ENCODE measurements at regions of chr21 and their contacts with region 1.

Region 1: DNA sequence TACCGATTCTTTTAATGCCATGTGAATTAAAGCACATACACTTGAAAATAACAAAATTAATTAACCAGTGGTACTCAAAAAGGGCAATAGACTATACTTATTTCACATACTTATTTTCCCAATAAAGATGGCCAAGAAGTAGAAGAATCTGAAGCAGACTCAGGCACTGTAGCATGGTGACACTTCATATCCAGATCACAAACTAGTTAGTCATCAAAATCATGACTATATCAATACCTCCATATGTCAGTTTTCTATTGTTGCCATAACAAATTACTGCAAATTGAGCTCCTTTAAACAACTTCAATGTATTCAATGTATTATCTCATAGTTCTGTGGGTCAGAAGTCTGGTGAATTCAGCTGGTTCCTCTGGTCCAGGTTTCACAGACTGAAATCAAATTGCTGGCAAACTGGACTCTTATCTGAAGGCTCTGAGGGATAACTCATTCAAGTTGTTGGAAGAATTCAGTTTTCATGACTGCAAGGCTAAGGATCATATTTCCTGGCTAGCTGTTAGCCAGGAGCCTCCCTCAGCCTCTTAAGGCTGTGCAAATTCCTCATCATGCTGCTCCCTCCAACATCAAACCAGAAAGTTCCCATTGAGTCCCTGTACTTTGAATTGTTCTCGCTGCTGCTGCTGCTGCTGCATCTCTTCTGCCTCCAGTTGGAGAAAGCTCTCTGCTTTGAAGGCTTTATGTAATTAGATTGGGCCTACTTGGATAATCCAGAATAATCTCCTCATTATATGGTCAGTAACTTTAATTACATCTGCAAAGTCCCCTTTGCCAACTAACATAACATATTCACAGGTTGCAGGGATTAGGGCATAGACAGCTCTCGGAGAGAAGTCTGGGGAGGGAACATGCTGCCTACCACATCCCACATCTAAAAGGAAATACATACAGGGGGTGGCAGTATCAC is 91.5 kb downstream of the MRPL39 start:
- DNase-seq: no peak
- H3K4me3 Mint-ChIP-seq: no peak overlapping the region
- H3K27ac Mint-ChIP-seq: no peak overlapping the region
- H3K4me1 Mint-ChIP-seq: peaks cover 45% of the 10 kb centered on the region
- H3K27me3 Mint-ChIP-seq: no peaks in the 10 kb centered on the region

Region 2: DNA sequence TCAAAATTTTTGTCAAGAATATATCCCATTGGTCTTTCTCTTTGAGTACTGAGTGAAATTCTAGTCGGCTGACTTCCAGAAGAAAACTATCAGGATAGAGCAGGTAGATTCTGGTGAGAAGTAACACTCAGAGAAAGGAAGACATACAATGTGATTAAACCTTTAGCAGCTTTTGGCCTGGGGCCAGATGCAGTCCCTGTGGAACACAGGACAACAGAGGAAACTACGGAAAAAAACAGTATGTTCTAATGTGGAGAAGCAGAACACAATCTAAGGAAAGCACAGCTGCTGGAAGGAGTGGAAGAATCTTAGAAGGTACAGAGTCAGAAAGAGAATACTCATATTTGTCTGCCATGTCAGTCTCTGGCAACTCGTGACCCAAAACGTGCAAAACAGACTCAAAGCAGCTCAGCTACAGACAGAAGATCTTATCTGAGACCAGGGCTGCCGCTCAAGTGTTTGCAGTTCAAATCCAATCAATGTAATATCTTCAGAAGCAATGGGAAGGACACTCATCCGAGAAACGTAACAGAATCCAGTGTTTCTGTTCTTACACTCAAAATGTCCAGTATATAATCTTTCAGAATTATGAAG is 192.3 kb before region 1 on chr21:
- CTCF ChIA-PET with region 1: no interaction called
- POLR2A ChIA-PET with region 1: no interaction called
- intact Hi-C with region 1: no loop called
- DNase-seq: no peak
- H3K4me3 Mint-ChIP-seq: no peak overlapping the region
- H3K27ac Mint-ChIP-seq: no peak overlapping the region
- H3K4me1 Mint-ChIP-seq: no peaks in the 10 kb centered on the region
- H3K27me3 Mint-ChIP-seq: no peaks in the 10 kb centered on the region

Region 3: GRCh38 chr21:25421327-25422028 is 94.3 kb before region 1 on chr21:
- CTCF ChIA-PET with region 1: no interaction called
- POLR2A ChIA-PET with region 1: interaction called, 5 read pairs
- intact Hi-C with region 1: loop called (anchors 1 kb)
- DNase-seq: peak; percentile 79
- H3K4me3 Mint-ChIP-seq: peak overlapping the region; percentile 67
- H3K27ac Mint-ChIP-seq: peak overlapping the region; percentile 89
- H3K4me1 Mint-ChIP-seq: peaks cover 62% of the 10 kb centered on the region
- H3K27me3 Mint-ChIP-seq: no peaks in the 10 kb centered on the region